Dorsolateral prefrontal cortex (tissue), 120 donors: ENCODE measurements at regions of chr6 and their contacts with region 1.

Region 1: DNA sequence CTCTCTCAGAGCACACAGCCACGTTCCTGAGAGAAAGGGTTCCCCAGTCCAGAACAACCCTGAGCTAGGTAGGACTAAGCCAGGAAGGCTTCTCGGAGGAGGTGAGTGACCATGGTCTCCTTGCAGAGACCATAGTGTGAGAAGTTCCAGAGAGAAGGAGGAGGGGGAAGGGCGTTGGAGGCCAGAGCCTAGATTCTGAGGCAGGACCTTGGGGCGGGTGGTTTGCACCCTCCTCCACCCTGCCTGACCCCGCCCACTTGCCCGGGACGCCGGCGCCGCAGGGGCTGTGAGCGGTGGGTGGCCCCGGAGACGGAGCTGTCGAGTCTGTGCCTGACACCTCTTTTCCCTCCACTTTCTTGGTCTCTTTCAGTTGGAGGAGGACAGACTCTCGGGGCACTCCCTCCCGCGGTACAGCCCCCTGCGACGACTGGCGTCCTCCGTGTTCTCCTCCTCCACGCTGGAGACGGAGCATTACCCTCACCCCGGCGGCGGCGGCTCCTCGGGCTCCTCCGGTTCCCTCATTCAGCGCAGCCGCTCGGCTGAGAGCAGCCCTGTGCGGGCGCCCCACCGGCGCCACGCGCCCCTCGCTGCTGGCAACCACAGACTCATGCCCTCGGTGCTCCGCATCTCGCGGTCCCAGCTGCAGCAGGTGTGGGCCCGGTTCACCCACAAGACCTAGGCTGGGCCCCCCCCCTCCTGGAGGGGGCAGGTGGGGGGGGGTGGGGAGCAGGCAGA is 26.2 kb downstream of the TTBK1 start:
- DNase-seq: no peak
- H3K4me3 ChIP-seq: peak overlapping the region in 29 of 59 donors; percentile 4 to 52 (median 22)
- H3K27ac ChIP-seq: peak overlapping the region in 50 of 59 donors; percentile 0 to 94 (median 81)
- H3K27me3 ChIP-seq: no peaks in the 10 kb centered on the region
- CTCF ChIP-seq: no peak

Region 2: DNA sequence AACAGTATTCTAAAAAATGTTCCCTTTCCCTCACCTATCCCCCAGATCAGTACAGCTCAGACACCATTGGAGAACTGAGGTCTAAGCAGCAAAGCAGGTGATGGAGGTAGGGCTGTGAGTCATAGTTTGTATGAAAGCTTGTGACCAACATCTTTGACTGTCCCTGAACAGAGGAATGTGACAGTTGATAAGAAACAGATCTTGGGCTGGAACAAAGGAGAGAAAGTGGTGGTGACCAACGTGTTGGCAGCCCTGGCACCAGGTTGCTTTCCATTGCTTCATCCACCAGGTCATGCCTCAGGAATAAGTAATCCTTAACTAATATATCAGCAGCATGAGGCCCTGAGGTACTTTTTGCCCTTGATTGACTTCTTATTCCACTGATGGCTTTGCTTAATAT is 59.1 kb after region 1 on chr6:
- intact Hi-C with region 1: loop called in 1 of 2 experiments (anchors 10 kb)
- DNase-seq: no peak
- H3K4me3 ChIP-seq: no peak overlapping the region
- H3K27ac ChIP-seq: no peak overlapping the region
- H3K27me3 ChIP-seq: no peaks in the 10 kb centered on the region
- CTCF ChIP-seq: no peak